ENCODE measurements at regions of chr10 and their contacts with region 1.

Region 1: DNA sequence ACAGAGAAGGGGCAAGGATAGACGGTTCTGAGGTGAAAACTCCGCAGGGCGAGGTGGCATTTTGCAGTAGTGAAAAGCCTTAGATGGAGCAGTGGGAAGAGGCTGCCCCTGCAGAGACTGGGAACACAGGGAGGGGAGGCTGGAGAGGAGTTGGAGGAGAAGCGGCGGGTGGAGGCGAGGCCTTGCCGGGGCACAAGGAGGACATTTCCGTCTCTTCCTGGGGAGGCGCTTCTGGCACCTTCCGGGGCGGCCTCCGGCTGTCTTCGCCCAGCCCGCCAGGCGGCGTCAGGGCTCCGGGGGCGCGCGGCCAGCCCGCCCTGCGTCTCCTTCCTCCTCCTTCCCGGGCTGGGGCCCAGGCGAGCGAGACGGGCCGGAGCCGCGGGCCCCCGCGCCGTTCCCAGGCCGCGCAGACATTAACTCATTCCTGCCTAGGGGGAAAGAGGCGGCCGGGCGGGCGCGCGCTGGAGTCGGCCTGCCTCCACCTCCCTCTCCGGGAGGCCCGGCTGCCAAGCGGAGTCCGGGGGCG is 42.7 kb downstream of the LDB3 start:
- DNase-seq: peak; percentile 87
- ATAC-seq: peak; percentile 93
- H3K4me3 Mint-ChIP-seq: peak overlapping the region; percentile 73
- H3K27ac Mint-ChIP-seq: peak overlapping the region; percentile 92
- H3K4me1 Mint-ChIP-seq: peaks cover 14% of the 10 kb centered on the region
- H3K27me3 Mint-ChIP-seq: no peaks in the 10 kb centered on the region

Region 2: GRCh38 chr10:86688398-86688921 is 22.6 kb before region 1 on chr10:
- CTCF ChIA-PET with region 1: interaction called, 10 read pairs
- POLR2A ChIA-PET with region 1: no interaction called
- DNase-seq: peak; percentile 69
- ATAC-seq: peak; percentile 86
- H3K4me3 Mint-ChIP-seq: no peak overlapping the region
- H3K27ac Mint-ChIP-seq: no peak overlapping the region
- H3K4me1 Mint-ChIP-seq: peaks cover 6% of the 10 kb centered on the region
- H3K27me3 Mint-ChIP-seq: no peaks in the 10 kb centered on the region

Region 3: GRCh38 chr10:86755740-86756510 is 44.9 kb after region 1 on chr10:
- CTCF ChIA-PET with region 1: interaction called, 6 read pairs
- POLR2A ChIA-PET with region 1: interaction called, 14 read pairs
- DNase-seq: peak; percentile 88
- ATAC-seq: peak; percentile 96
- H3K4me3 Mint-ChIP-seq: peak overlapping the region; percentile 79
- H3K27ac Mint-ChIP-seq: peak overlapping the region; percentile 68
- H3K4me1 Mint-ChIP-seq: peaks cover 51% of the 10 kb centered on the region
- H3K27me3 Mint-ChIP-seq: peaks cover 38% of the 10 kb centered on the region

Region 4: DNA sequence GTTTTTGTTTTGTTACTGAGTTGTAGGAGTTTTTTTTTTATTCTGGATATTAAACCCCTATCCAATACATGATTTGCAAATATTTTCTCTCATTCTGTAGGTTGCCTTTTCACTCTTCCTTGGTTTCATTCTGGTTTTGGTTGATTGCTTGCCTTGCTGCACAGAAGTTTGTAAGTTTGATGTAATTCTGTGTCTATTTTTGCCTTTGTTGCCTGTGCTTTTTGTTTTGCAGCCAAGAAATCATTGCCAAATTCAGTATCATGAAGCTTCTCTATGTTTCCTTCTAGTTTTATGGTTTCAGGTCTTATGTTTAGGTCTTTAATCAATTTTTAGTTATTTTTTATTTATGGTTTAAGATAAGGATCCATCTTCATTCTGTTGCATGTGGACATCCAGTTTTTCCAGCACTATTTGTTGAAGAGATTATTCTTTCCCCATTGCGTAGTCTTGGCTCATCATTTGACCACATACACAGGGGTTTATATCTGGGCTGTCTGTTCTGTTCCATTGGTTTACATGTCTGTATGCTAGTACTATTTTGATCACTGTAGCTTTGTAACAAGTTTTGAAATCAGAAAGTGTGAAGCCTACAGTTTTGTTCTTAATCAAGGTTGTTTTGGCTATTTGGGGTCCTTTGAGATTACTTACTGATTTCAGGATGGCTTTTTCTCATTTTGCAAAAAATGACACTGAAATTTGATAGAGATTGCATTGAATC is 71.8 kb after region 1 on chr10:
- CTCF ChIA-PET with region 1: no interaction called
- POLR2A ChIA-PET with region 1: no interaction called
- DNase-seq: no peak
- ATAC-seq: no peak
- H3K4me3 Mint-ChIP-seq: no peak overlapping the region
- H3K27ac Mint-ChIP-seq: no peak overlapping the region
- H3K4me1 Mint-ChIP-seq: no peaks in the 10 kb centered on the region
- H3K27me3 Mint-ChIP-seq: no peaks in the 10 kb centered on the region

Region 5: DNA sequence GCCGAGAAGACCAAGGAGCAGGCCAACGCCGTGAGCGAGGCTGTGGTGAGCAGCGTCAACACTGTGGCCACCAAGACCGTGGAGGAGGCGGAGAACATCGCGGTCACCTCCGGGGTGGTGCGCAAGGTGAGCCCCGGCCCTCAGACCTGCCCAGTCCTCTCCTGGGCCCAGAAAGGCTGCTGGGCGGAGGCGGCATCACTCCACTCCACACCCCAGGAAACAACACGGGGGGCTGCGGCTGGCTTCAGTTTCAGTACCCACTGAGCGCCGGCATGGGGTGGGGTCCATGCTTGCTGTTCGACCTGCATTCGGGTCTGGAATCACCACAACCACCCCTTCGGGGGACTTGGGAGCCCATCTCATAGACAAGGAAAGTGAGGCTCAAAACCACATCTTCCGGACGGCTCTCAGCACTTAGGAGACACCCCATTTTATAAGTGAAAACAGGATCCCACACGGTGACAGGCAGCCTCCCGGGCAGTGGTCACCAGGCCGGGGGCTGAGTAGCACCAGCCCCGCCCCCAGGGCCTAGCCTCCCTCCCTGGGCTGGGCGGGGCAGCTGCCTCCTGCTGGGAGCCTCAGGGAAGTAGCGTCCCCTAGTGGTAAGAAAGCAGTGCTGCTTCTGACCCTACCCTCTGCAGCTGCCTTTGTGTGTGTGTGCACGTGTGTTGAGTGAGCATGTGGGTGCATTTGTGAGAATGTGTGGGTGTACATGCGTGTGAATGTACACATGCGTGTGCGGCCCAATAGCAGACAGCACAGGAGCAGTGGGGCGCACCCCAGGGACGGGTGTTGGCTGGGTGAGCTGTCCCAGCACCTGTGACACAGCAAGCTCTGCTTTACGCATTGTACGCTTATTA is 249.2 kb after region 1 on chr10:
- CTCF ChIA-PET with region 1: no interaction called
- POLR2A ChIA-PET with region 1: no interaction called
- DNase-seq: peak; percentile 37
- ATAC-seq: peak; percentile 65
- H3K4me3 Mint-ChIP-seq: no peak overlapping the region
- H3K27ac Mint-ChIP-seq: peak overlapping the region; percentile 49
- H3K4me1 Mint-ChIP-seq: no peaks in the 10 kb centered on the region
- H3K27me3 Mint-ChIP-seq: no peaks in the 10 kb centered on the region